Heart left ventricle (tissue), 16 donors: ENCODE measurements at regions of chr2 and their contacts with region 1.

Region 1: GRCh38 chr2:77521931-77522470 is at the start of gene LRRTM4:
- DNase-seq: peak in 3 of 5 donors; percentile 11 to 37 (median 31)
- ATAC-seq: peak in 3 of 4 donors; percentile 79 to 97 (median 95)
- H3K4me3 ChIP-seq: peak within 1 kb of the TSS in 8 of 12 donors; percentile 8 to 38 (median 28)
- H3K27ac ChIP-seq: no peak within 1 kb of the TSS
- H3K4me1 ChIP-seq: no peaks in the 10 kb centered on the region
- H3K27me3 ChIP-seq: peaks cover 0 to 5% (median 0%) of the 10 kb centered on the region in 9 donors
- CTCF ChIP-seq: peak in 8 of 12 donors; percentile 7 to 46 (median 30)
- POLR2A ChIP-seq: no peak
- total RNA-seq, gene LRRTM4: 0.38 to 1.3 (median 0.63) TPM in 8 of 9 donors, not detected in the other

Region 2: DNA sequence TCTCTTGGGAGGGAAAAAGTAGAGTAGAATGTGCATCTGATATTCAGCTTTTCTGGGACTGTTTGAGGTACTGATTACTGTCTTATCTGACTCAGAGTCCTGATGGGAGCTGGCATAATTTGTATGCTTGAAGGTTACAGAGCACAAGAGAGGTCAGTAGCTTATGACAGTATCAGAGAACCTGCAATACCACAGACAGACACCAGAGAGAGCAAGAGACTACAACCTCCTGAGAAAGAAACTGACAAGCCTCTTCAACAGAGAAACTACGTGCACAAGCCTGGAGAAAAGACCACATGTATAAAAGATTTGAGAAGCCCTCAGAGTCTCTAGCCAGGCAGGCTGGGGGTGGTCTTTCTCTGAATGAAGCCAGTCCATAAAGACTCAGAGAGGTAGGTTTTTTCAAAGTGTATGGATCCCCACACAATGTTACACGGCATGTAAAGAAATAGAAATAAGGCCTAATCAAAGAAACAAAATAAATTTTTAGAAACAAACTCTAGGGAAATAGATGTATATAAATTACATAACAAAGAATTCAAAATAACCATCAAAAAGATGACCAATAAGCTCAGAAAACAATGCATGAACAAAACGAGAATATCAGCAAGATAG is 568.2 kb before region 1 on chr2:
- intact Hi-C with region 1: loop called in 6 of 10 experiments (anchors 5 to 10 kb)
- DNase-seq: peak in 2 of 5 donors; percentile 5 to 15
- ATAC-seq: peak in 2 of 4 donors; percentile 59 to 74
- H3K4me3 ChIP-seq: no peak overlapping the region
- H3K27ac ChIP-seq: no peak overlapping the region
- H3K4me1 ChIP-seq: no peaks in the 10 kb centered on the region
- H3K27me3 ChIP-seq: no peaks in the 10 kb centered on the region
- CTCF ChIP-seq: peak; percentile 24 to 67 (median 55)
- POLR2A ChIP-seq: no peak

Region 3: DNA sequence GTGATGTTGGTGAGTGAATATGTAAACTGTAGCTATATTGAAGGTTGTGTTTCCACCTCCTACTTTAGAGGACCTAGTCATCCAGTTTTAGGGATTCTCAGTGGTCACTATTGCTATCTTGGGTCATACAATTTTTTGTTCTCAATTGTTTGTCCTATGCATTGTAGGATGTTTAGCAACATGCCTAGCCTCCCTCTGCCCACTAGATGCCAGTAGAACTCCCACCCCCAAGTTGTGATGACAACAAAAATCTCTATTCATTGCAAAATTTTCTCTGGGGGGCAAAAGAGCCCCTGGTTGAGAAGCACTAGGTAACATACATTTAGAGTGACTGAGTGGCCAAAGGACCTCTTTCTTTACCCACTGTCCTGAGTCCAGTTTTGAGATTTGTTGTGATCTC is 87.1 kb before region 1 on chr2:
- intact Hi-C with region 1: loop called in 3 of 10 experiments (anchors 5 to 10 kb)
- DNase-seq: no peak
- ATAC-seq: no peak
- H3K4me3 ChIP-seq: no peak overlapping the region
- H3K27ac ChIP-seq: no peak overlapping the region
- H3K4me1 ChIP-seq: no peaks in the 10 kb centered on the region
- H3K27me3 ChIP-seq: no peaks in the 10 kb centered on the region
- CTCF ChIP-seq: peak in 7 of 12 donors; percentile 16 to 37 (median 28)
- POLR2A ChIP-seq: no peak

Region 4: DNA sequence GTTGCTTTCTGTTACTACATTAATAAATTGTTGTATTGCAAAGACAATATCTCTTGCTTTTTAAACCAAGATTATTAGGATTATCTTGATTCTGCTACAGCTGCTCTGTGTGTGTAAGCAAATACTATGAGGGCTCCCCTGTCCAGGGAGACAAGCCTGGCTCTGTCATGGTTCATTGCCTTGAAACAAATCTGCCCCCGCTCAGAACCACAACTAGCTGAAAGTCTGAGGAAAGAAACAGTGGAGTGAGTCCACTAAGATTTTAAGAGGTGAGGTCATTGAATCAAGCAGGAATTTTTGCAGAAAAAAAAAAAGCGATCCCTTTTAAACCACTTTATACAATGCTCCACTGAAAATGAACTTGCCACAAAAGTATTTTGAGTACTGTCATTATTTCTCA is 31.0 kb after region 1 on chr2:
- intact Hi-C with region 1: no loop called
- DNase-seq: no peak
- ATAC-seq: no peak
- H3K4me3 ChIP-seq: no peak overlapping the region
- H3K27ac ChIP-seq: no peak overlapping the region
- H3K4me1 ChIP-seq: no peaks in the 10 kb centered on the region
- H3K27me3 ChIP-seq: no peaks in the 10 kb centered on the region
- CTCF ChIP-seq: no peak
- POLR2A ChIP-seq: no peak